K562 (cell line): ENCODE measurements at regions of chr6 and their contacts with region 1.

Region 1: GRCh38 chr6:32658268-32658897 is 8.1 kb downstream of the HLA-DQB1 start:
- DNase-seq: no peak
- ATAC-seq: no peak
- H3K4me3 ChIP-seq: no peak overlapping the region
- H3K27ac ChIP-seq: no peak overlapping the region
- H3K4me1 ChIP-seq: no peaks in the 10 kb centered on the region
- H3K27me3 ChIP-seq: no peaks in the 10 kb centered on the region
- CTCF ChIP-seq: no peak
- EP300 ChIP-seq: no peak
- POLR2A ChIP-seq: no peak
- RAD21 ChIP-seq: no peak

Region 2: DNA sequence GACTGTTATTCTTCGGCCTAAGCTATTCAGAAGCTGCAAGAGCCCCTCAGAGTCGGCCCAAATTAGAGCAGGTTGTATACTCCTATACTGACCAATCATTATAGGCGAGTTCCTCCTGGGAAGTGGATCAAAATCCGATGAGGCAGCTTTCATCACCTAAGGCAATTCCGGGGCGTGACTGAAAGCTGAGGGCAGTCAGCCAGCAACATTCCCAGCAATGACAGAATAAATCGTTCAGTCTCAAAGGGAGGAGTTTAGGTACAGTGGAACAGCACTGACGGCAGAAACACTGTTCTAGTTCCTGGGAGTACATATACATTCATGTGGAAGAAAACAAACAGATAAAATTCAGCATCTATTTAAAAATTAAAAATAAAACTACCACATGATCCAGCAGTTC is 94.2 kb after region 1 on chr6:
- CTCF ChIA-PET with region 1: no interaction called
- POLR2A ChIA-PET with region 1: no interaction called
- in situ Hi-C with region 1: loop called (anchors 5 kb)
- intact Hi-C with region 1: loop called (anchors 5 kb)
- DNase-seq: no peak
- ATAC-seq: no peak
- H3K4me3 ChIP-seq: no peak overlapping the region
- H3K27ac ChIP-seq: no peak overlapping the region
- H3K4me1 ChIP-seq: no peaks in the 10 kb centered on the region
- H3K27me3 ChIP-seq: peaks cover 0 to 14% of the 10 kb centered on the region in 2 experiments; a peak in 2 of 5 replicates
- CTCF ChIP-seq: no peak
- EP300 ChIP-seq: no peak
- POLR2A ChIP-seq: no peak
- RAD21 ChIP-seq: no peak